Psoas muscle (tissue), 8 donors: ENCODE measurements at regions of chr12 and their contacts with region 1.

Region 1: DNA sequence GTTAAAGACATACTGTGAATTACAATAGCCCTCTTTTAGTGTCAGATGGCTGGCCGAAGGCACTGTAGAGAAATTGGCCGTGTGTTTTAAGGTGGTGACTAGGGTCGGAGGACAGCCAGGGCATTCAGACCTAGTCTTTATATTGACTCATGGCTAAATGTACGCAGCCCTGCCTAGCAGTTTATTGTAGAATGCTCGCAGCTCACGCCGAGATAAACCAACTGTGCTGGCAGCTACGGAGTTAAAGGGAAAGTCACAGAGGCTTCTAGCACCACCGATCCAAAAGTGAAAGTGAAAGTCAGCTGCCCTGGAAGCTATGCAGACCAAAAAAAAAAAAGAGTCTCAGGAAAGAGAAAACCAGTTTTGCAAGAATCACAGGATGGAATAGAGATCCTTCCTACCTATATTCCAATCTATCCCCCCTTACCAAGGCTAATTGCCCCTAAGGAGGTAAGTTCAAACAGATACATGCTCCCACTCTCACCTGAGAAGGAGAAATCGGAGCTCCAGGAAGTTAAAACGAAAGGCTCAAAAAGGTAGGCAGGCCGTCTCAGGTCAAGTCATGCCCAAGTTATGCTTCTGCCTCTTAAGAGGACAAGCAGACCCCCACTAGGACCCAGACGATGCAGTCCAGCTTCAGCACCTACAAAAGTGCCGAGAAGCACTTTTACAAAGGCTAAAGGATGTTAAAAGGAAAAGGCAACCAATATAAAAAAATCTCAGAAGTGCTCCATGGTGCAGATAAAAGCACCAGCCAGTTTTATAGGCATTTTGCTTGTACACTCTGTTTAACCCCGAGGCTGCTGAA is 24.8 kb downstream of the KLRK1 start:
- DNase-seq: peak; percentile 35 to 57
- ATAC-seq: peak; percentile 79 to 84 (median 82)
- H3K4me3 ChIP-seq: peak overlapping the region; percentile 78
- H3K27ac ChIP-seq: peak overlapping the region; percentile 87
- H3K4me1 ChIP-seq: peaks cover 23% of the 10 kb centered on the region
- H3K27me3 ChIP-seq: no peaks in the 10 kb centered on the region
- CTCF ChIP-seq: no peak

Region 2: GRCh38 chr12:8697476-8698131 is 1667.4 kb before region 1 on chr12 and contains the start of gene RIMKLB:
- intact Hi-C with region 1: loop called in 1 of 2 experiments (anchors 10 kb)
- DNase-seq: peak; percentile 87 to 89
- ATAC-seq: peak; percentile 84 to 93 (median 89)
- H3K4me3 ChIP-seq: peak within 1 kb of the TSS; percentile 99
- H3K27ac ChIP-seq: peak within 1 kb of the TSS; percentile 96
- H3K4me1 ChIP-seq: peaks cover 22% of the 10 kb centered on the region
- H3K27me3 ChIP-seq: no peaks in the 10 kb centered on the region
- CTCF ChIP-seq: no peak
- total RNA-seq, gene RIMKLB: 4.6 to 19.1 (median 11.2) TPM

Region 3: DNA sequence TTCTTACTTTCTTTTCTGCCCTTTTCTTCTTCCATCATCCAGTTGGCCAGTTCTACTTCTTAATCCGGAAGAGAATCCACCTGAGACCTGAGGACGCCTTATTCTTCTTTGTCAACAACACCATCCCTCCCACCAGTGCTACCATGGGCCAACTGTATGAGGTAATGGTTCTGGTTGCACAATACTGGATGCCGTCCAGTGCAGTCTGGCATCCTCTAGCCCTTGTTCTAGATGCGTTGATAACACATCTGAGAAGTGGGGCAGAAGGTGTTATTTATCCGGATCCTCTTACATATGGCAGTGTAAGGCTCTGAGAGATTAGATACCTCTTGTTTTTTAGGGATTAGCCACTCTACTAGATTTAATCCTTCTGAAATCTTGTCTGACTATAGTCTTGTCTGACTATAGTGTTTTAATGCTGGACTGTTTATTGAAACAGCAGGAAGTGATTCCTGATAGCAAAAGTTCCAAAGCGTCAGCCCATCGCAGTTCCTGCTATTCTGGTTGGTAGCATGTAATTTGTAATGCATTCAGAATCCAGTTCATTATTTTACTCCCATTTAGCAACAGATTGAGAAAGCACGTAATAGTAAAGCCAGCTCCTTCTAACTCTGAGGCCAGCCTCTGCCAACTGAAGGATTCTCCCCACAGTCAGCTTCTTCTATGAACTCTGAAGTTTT is 144.5 kb before region 1 on chr12:
- intact Hi-C with region 1: loop called in 1 of 2 experiments (anchors 10 kb)
- DNase-seq: peak; percentile 82 to 90
- ATAC-seq: peak; percentile 84 to 96 (median 94)
- H3K4me3 ChIP-seq: peak overlapping the region; percentile 33
- H3K27ac ChIP-seq: peak overlapping the region; percentile 100
- H3K4me1 ChIP-seq: peaks cover 45% of the 10 kb centered on the region
- H3K27me3 ChIP-seq: no peaks in the 10 kb centered on the region
- CTCF ChIP-seq: no peak

Region 4: DNA sequence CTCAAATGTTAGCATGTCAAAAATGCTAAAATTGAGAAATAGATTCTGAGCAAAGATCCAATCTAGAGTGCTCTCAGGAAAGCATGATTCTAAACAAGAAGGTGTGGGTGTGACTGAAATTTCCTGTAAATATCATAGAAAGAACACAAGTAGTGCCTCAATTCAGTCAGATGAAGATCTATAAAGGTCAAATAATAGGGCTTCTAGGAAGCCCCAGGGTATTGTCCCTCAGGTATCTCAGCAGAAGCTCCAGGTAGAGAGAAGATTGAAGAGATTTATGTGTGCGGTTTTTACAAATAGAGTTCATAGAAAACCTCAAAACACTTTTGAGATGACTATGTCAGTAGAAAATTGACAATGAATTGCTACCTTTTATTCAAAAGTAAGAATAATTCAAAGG is 44.4 kb before region 1 on chr12:
- intact Hi-C with region 1: no loop called
- DNase-seq: no peak
- ATAC-seq: no peak
- H3K4me3 ChIP-seq: no peak overlapping the region
- H3K27ac ChIP-seq: no peak overlapping the region
- H3K4me1 ChIP-seq: no peaks in the 10 kb centered on the region
- H3K27me3 ChIP-seq: no peaks in the 10 kb centered on the region
- CTCF ChIP-seq: no peak